ENCODE measurements at regions of chr4 and their contacts with region 1.

Region 1: GRCh38 chr4:107747748-107748486 is 27.9 kb upstream of the PAPSS1 start:
- DNase-seq: no peak
- H3K4me3 Mint-ChIP-seq: no peak overlapping the region
- H3K27ac Mint-ChIP-seq: no peak overlapping the region
- H3K4me1 Mint-ChIP-seq: no peaks in the 10 kb centered on the region
- H3K27me3 Mint-ChIP-seq: peaks cover 34% of the 10 kb centered on the region

Region 2: DNA sequence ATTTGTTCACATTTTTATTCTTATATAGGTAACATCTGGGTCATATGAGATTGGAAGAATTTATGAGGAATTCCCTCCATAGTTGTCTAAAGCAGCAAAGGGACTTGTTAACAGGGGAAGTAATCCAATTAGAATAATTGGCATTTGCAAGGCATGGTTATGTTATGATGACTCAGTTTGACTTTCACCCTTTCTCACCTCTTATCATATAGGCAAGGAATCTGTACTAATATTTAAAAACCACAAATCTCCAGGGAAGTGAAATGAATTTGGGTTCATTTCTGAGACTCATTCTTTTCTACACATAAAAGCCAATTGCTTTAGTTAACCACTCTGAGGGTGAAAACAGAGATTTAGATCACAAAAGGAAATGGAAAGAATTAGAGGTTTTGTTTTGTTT is 430.3 kb before region 1 on chr4:
- CTCF ChIA-PET with region 1: no interaction called
- POLR2A ChIA-PET with region 1: no interaction called
- DNase-seq: no peak
- H3K4me3 Mint-ChIP-seq: no peak overlapping the region
- H3K27ac Mint-ChIP-seq: no peak overlapping the region
- H3K4me1 Mint-ChIP-seq: no peaks in the 10 kb centered on the region
- H3K27me3 Mint-ChIP-seq: no peaks in the 10 kb centered on the region

Region 3: GRCh38 chr4:107736924-107737448 is 10.9 kb before region 1 on chr4:
- CTCF ChIA-PET with region 1: interaction called, 15 read pairs
- POLR2A ChIA-PET with region 1: no interaction called
- DNase-seq: peak; percentile 38
- H3K4me3 Mint-ChIP-seq: no peak overlapping the region
- H3K27ac Mint-ChIP-seq: no peak overlapping the region
- H3K4me1 Mint-ChIP-seq: no peaks in the 10 kb centered on the region
- H3K27me3 Mint-ChIP-seq: no peaks in the 10 kb centered on the region

Region 4: GRCh38 chr4:107774681-107775080 is 26.8 kb after region 1 on chr4:
- CTCF ChIA-PET with region 1: no interaction called
- POLR2A ChIA-PET with region 1: no interaction called
- DNase-seq: no peak
- H3K4me3 Mint-ChIP-seq: no peak overlapping the region
- H3K27ac Mint-ChIP-seq: no peak overlapping the region
- H3K4me1 Mint-ChIP-seq: no peaks in the 10 kb centered on the region
- H3K27me3 Mint-ChIP-seq: peaks cover 3% of the 10 kb centered on the region

Region 5: DNA sequence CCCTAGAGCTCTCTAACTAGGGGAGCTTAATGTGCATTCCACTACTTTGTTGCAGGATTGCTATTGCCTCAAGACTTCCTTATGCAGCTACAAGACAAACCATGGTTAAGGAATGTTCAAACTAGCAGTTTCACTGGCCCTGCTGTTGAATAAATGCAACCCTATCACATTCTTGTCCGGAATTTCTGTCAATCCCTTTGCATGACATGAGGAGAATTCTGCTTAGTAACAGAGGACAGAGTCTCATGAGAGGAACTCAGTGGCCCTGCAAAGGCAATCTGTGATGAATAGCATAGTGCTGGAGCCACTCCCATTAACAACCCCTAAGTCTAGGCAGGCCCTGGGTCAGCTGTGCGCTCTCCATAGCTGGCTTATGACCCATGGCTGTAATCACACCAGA is 46.1 kb after region 1 on chr4:
- CTCF ChIA-PET with region 1: no interaction called
- POLR2A ChIA-PET with region 1: no interaction called
- DNase-seq: no peak
- H3K4me3 Mint-ChIP-seq: no peak overlapping the region
- H3K27ac Mint-ChIP-seq: no peak overlapping the region
- H3K4me1 Mint-ChIP-seq: no peaks in the 10 kb centered on the region
- H3K27me3 Mint-ChIP-seq: peaks cover 19% of the 10 kb centered on the region

Region 6: GRCh38 chr4:108135549-108136209 is 387.8 kb after region 1 on chr4:
- CTCF ChIA-PET with region 1: no interaction called
- POLR2A ChIA-PET with region 1: no interaction called
- DNase-seq: no peak
- H3K4me3 Mint-ChIP-seq: no peak overlapping the region
- H3K27ac Mint-ChIP-seq: no peak overlapping the region
- H3K4me1 Mint-ChIP-seq: peaks cover 44% of the 10 kb centered on the region
- H3K27me3 Mint-ChIP-seq: no peaks in the 10 kb centered on the region